H1 (cell line): ENCODE measurements at regions of chr3 and their contacts with region 1.

Region 1: GRCh38 chr3:77338195-77338594 is 298.3 kb downstream of the ROBO2 start:
- DNase-seq: no peak
- H3K4me3 ChIP-seq: no peak overlapping the region
- H3K27ac ChIP-seq: no peak overlapping the region
- H3K4me1 ChIP-seq: no peaks in the 10 kb centered on the region
- H3K27me3 ChIP-seq: no peaks in the 10 kb centered on the region
- CTCF ChIP-seq: no peak
- EP300 ChIP-seq: no peak
- POLR2A ChIP-seq: no peak
- RAD21 ChIP-seq: no peak

Region 2: DNA sequence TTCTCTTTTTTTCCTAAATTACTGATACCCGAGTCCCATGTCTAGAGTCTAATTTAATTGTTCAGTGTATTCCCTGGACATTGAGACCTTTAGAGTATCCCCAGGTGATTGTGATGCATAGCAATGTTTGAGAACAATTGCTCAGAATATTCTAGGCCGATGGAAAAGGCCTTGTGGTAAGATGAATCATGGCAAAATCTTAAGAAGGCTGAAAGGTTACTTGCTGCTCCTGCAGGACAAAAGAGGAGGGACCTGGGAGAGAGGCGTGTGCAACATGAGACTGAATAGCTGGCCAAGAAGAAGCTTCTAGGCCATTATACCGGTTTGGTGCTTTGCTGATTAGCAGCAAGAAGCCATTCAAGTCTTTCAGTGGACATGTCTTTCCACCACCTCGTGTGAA is 41.7 kb before region 1 on chr3:
- CTCF ChIA-PET with region 1: no interaction called
- POLR2A ChIA-PET with region 1: no interaction called
- DNase-seq: no peak
- H3K4me3 ChIP-seq: no peak overlapping the region
- H3K27ac ChIP-seq: no peak overlapping the region
- H3K4me1 ChIP-seq: no peaks in the 10 kb centered on the region
- H3K27me3 ChIP-seq: no peaks in the 10 kb centered on the region
- CTCF ChIP-seq: no peak
- EP300 ChIP-seq: no peak
- POLR2A ChIP-seq: no peak
- RAD21 ChIP-seq: no peak

Region 3: GRCh38 chr3:77309460-77309859 is 28.7 kb before region 1 on chr3:
- CTCF ChIA-PET with region 1: no interaction called
- POLR2A ChIA-PET with region 1: no interaction called
- DNase-seq: no peak
- H3K4me3 ChIP-seq: no peak overlapping the region
- H3K27ac ChIP-seq: no peak overlapping the region
- H3K4me1 ChIP-seq: no peaks in the 10 kb centered on the region
- H3K27me3 ChIP-seq: peaks cover 0 to 1% (median 0%) of the 10 kb centered on the region in 4 experiments; a peak in 1 of 7 replicates
- CTCF ChIP-seq: no peak
- EP300 ChIP-seq: no peak
- POLR2A ChIP-seq: no peak
- RAD21 ChIP-seq: no peak

Region 4: GRCh38 chr3:77348231-77348855 is 10.1 kb after region 1 on chr3:
- CTCF ChIA-PET with region 1: interaction called, 14 read pairs
- POLR2A ChIA-PET with region 1: no interaction called
- DNase-seq: peak; percentile 50 to 59
- H3K4me3 ChIP-seq: no peak overlapping the region
- H3K27ac ChIP-seq: no peak overlapping the region
- H3K4me1 ChIP-seq: peaks cover 0 to 8% (median 4%) of the 10 kb centered on the region in 4 experiments; a peak in 2 of 7 replicates
- H3K27me3 ChIP-seq: no peaks in the 10 kb centered on the region
- CTCF ChIP-seq: peak; percentile 34 to 75 (median 72)
- EP300 ChIP-seq: no peak
- POLR2A ChIP-seq: no peak
- RAD21 ChIP-seq: peak; percentile 81 to 82